Calu3 (cell line): ENCODE measurements at regions of chr3 and their contacts with region 1.

Region 1: DNA sequence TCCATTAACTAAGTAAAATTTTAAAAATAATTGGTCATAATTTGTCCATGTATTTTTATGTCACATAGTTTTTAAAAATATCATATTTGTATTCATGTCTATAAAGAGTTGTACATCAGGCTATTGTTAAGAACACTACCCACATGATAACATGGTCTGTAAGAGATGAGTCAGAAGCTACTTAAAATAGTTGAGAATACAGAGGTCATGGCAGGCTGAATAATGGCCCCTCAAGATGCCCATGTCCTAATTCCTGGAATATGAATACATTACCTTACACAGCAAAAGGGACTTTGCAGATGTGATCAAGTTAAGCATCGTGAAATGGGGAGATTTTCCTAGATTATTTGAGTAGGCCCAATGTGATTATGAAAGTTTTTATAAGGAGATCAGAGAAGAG is 782.9 kb upstream of the GOLIM4 start:
- DNase-seq: no peak
- H3K4me3 Mint-ChIP-seq: no peak overlapping the region
- H3K27ac Mint-ChIP-seq: no peak overlapping the region
- H3K4me1 Mint-ChIP-seq: peaks cover 71% of the 10 kb centered on the region
- H3K27me3 Mint-ChIP-seq: no peaks in the 10 kb centered on the region
- CTCF ChIP-seq: no peak

Region 2: GRCh38 chr3:168889666-168890065 is 11.0 kb after region 1 on chr3:
- CTCF ChIA-PET with region 1: interaction called, 14 read pairs
- intact Hi-C with region 1: no loop called
- DNase-seq: peak; percentile 35
- H3K4me3 Mint-ChIP-seq: no peak overlapping the region
- H3K27ac Mint-ChIP-seq: no peak overlapping the region
- H3K4me1 Mint-ChIP-seq: peaks cover 14% of the 10 kb centered on the region
- H3K27me3 Mint-ChIP-seq: no peaks in the 10 kb centered on the region
- CTCF ChIP-seq: peak; percentile 55

Region 3: DNA sequence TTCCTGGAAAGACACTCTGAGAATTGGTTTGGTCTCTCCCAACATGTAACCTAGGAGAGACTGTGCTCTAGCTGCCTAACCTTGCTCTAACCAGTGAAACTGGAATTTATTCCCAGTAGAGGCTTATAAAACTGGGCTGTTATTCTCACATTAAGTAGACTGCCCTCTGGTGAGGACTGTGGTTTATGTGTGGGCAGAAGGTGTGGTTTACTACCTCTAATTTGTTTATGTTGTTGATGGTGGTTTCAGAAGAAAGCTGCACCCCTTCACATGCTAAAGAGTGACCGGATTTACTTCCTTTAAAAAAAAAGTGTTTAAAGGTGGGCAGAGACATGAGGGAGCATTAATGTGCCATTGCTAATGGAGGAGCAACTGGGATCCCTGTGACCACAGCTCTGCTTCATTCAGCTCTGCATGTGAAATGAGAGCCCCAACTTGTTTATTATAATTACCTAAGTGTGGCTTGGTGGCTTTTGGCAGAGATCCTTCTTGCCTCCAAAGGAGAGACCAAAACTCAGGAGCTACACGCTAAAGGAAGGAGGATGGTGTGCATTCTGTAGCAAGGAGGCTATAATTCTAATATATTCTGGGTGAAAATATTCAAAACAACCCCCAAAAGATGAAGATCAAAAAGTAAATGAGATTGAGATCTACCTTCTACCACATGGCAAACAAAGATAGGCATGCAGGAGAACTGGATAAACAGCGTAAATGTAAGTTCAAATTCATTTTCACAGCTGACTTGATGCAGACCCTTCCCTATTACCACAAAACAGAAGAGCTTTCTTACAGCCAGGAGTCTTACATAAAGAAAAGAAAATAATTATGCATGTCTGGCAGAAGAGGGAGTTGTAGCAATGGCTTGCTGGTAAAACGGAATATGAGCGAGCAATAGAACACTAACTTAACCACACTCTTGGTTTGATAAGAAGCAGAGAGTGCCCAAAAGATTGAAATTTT is 511.9 kb after region 1 on chr3:
- CTCF ChIA-PET with region 1: no interaction called
- intact Hi-C with region 1: no loop called
- DNase-seq: peak; percentile 66
- H3K4me3 Mint-ChIP-seq: peak overlapping the region; percentile 41
- H3K27ac Mint-ChIP-seq: peak overlapping the region; percentile 94
- H3K4me1 Mint-ChIP-seq: peaks cover 47% of the 10 kb centered on the region
- H3K27me3 Mint-ChIP-seq: no peaks in the 10 kb centered on the region
- CTCF ChIP-seq: peak; percentile 50